Natural killer cell (primary cell): ENCODE measurements at regions of chr3 and their contacts with region 1.

Region 1: DNA sequence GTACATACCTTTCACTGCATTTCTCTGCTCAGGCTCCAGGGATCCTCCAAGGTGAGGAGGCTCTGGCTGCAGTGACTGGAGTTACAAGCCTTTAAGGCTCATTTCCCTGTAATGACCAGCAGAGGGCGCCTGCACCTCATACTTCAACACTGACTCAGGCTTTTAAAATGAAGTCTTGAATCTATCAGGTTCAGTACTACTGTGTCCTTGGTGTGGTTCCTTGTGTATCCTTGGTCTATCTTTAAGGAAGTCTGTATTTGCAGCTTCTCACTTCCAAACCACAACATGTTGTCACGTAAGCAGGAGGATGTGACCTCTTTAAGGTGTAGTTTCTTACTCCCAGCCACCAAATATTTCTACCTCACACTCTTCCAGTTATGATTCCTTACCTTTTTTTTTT is 122.5 kb upstream of the ZBED2 start:
- DNase-seq: peak; percentile 59 to 86
- ATAC-seq: peak; percentile 91 to 97 (median 94)
- H3K4me3 ChIP-seq: no peak overlapping the region
- H3K4me3 Mint-ChIP-seq: no peak overlapping the region
- H3K27ac ChIP-seq: no peak overlapping the region
- H3K27ac Mint-ChIP-seq: peak overlapping the region; percentile 67 to 83
- H3K4me1 ChIP-seq: no peaks in the 10 kb centered on the region
- H3K4me1 Mint-ChIP-seq: peaks cover 8 to 19% of the 10 kb centered on the region in 2 donors
- H3K27me3 ChIP-seq: no peaks in the 10 kb centered on the region
- H3K27me3 Mint-ChIP-seq: no peaks in the 10 kb centered on the region
- CTCF ChIP-seq: peak; percentile 88

Region 2: GRCh38 chr3:111668912-111669488 is 48.6 kb before region 1 on chr3:
- intact Hi-C with region 1: loop called (anchors 1 kb)
- DNase-seq: peak in 1 of 2 donors; percentile 71
- ATAC-seq: peak; percentile 44 to 57 (median 50)
- H3K4me3 ChIP-seq: no peak overlapping the region
- H3K4me3 Mint-ChIP-seq: peak overlapping the region; percentile 78
- H3K27ac ChIP-seq: no peak overlapping the region
- H3K27ac Mint-ChIP-seq: peak overlapping the region; percentile 89 to 97
- H3K4me1 ChIP-seq: peaks cover 28% of the 10 kb centered on the region
- H3K4me1 Mint-ChIP-seq: peaks cover 64 to 68% of the 10 kb centered on the region in 2 donors
- H3K27me3 ChIP-seq: no peaks in the 10 kb centered on the region
- H3K27me3 Mint-ChIP-seq: no peaks in the 10 kb centered on the region
- CTCF ChIP-seq: peak; percentile 95

Region 3: GRCh38 chr3:111859974-111860859 is 142.6 kb after region 1 on chr3:
- intact Hi-C with region 1: loop called (anchors 1 kb)
- DNase-seq: peak; percentile 61 to 81
- ATAC-seq: peak; percentile 46 to 75 (median 59)
- H3K4me3 ChIP-seq: peak overlapping the region; percentile 96
- H3K4me3 Mint-ChIP-seq: peak overlapping the region; percentile 93
- H3K27ac ChIP-seq: peak overlapping the region; percentile 93
- H3K27ac Mint-ChIP-seq: peak overlapping the region; percentile 93 to 97
- H3K4me1 ChIP-seq: peaks cover 15% of the 10 kb centered on the region
- H3K4me1 Mint-ChIP-seq: peaks cover 53 to 57% of the 10 kb centered on the region in 2 donors
- H3K27me3 ChIP-seq: no peaks in the 10 kb centered on the region
- H3K27me3 Mint-ChIP-seq: peaks cover 0 to 3% of the 10 kb centered on the region in 2 donors
- CTCF ChIP-seq: no peak

Region 4: GRCh38 chr3:111967651-111968274 is 250.2 kb after region 1 on chr3:
- intact Hi-C with region 1: loop called (anchors 1 kb)
- DNase-seq: peak; percentile 66 to 89
- ATAC-seq: peak; percentile 86 to 98 (median 95)
- H3K4me3 ChIP-seq: no peak overlapping the region
- H3K4me3 Mint-ChIP-seq: no peak overlapping the region
- H3K27ac ChIP-seq: no peak overlapping the region
- H3K27ac Mint-ChIP-seq: peak overlapping the region; percentile 8 to 62
- H3K4me1 ChIP-seq: no peaks in the 10 kb centered on the region
- H3K4me1 Mint-ChIP-seq: peaks cover 5 to 7% of the 10 kb centered on the region in 2 donors
- H3K27me3 ChIP-seq: no peaks in the 10 kb centered on the region
- H3K27me3 Mint-ChIP-seq: no peaks in the 10 kb centered on the region
- CTCF ChIP-seq: peak; percentile 96

Region 5: GRCh38 chr3:112043603-112044201 is 326.1 kb after region 1 on chr3:
- intact Hi-C with region 1: loop called (anchors 2 kb)
- DNase-seq: peak in 1 of 2 donors; percentile 80
- ATAC-seq: peak; percentile 82 to 97 (median 96)
- H3K4me3 ChIP-seq: no peak overlapping the region
- H3K4me3 Mint-ChIP-seq: no peak overlapping the region
- H3K27ac ChIP-seq: no peak overlapping the region
- H3K27ac Mint-ChIP-seq: no peak overlapping the region
- H3K4me1 ChIP-seq: no peaks in the 10 kb centered on the region
- H3K4me1 Mint-ChIP-seq: no peaks in the 10 kb centered on the region
- H3K27me3 ChIP-seq: no peaks in the 10 kb centered on the region
- H3K27me3 Mint-ChIP-seq: peaks cover 3 to 14% of the 10 kb centered on the region in 2 donors
- CTCF ChIP-seq: peak; percentile 81

Region 6: GRCh38 chr3:112175646-112176045 is 458.0 kb after region 1 on chr3:
- intact Hi-C with region 1: no loop called
- DNase-seq: no peak
- ATAC-seq: no peak
- H3K4me3 ChIP-seq: no peak overlapping the region
- H3K4me3 Mint-ChIP-seq: no peak overlapping the region
- H3K27ac ChIP-seq: no peak overlapping the region
- H3K27ac Mint-ChIP-seq: no peak overlapping the region
- H3K4me1 ChIP-seq: no peaks in the 10 kb centered on the region
- H3K4me1 Mint-ChIP-seq: no peaks in the 10 kb centered on the region
- H3K27me3 ChIP-seq: no peaks in the 10 kb centered on the region
- H3K27me3 Mint-ChIP-seq: peaks cover 0 to 5% of the 10 kb centered on the region in 2 donors
- CTCF ChIP-seq: no peak